CD8-positive, alpha-beta T cell (primary cell): ENCODE measurements at regions of chr13 and their contacts with region 1.

Region 1: GRCh38 chr13:40190641-40191100 is 475.8 kb downstream of the FOXO1 start:
- DNase-seq: peak; percentile 36 to 85 (median 75)
- ATAC-seq: peak; percentile 36
- H3K4me3 ChIP-seq: no peak overlapping the region
- H3K4me3 Mint-ChIP-seq: peak overlapping the region; percentile 66
- H3K27ac ChIP-seq: peak overlapping the region; percentile 50 to 58
- H3K27ac Mint-ChIP-seq: peak overlapping the region; percentile 90
- H3K4me1 ChIP-seq: peaks cover 65% of the 10 kb centered on the region
- H3K4me1 Mint-ChIP-seq: peaks cover 83% of the 10 kb centered on the region
- H3K27me3 ChIP-seq: no peaks in the 10 kb centered on the region
- H3K27me3 Mint-ChIP-seq: no peaks in the 10 kb centered on the region
- CTCF ChIP-seq: no peak

Region 2: DNA sequence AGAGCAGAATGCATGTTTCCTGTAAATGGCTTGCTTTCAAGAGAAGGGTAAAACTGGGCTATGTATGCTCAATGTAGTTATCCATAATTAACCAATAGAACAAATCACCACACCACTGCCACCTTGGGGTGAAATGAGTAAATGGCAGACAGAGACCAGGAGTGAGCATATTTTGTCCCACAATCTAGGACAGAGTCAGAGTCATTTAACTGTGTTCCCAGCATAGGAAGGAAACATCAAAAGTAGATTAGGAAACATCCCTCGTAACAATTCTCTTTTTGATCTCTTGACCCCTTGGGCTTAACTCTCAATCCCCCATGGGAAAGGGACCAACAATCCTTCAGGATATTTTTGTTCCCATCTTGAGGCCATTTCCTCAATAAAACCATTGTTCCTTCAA is 927.6 kb before region 1 on chr13:
- CTCF ChIA-PET with region 1: no interaction called
- POLR2A ChIA-PET with region 1: no interaction called
- intact Hi-C with region 1: no loop called
- DNase-seq: peak in 2 of 9 experiments; percentile 10 to 21
- ATAC-seq: no peak
- H3K4me3 ChIP-seq: no peak overlapping the region
- H3K4me3 Mint-ChIP-seq: no peak overlapping the region
- H3K27ac ChIP-seq: no peak overlapping the region
- H3K27ac Mint-ChIP-seq: no peak overlapping the region
- H3K4me1 ChIP-seq: no peaks in the 10 kb centered on the region
- H3K4me1 Mint-ChIP-seq: no peaks in the 10 kb centered on the region
- H3K27me3 ChIP-seq: no peaks in the 10 kb centered on the region
- H3K27me3 Mint-ChIP-seq: peaks cover 7% of the 10 kb centered on the region
- CTCF ChIP-seq: peak; percentile 41

Region 3: GRCh38 chr13:39577838-39578491 is 612.7 kb before region 1 on chr13:
- CTCF ChIA-PET with region 1: no interaction called
- POLR2A ChIA-PET with region 1: no interaction called
- intact Hi-C with region 1: no loop called
- DNase-seq: no peak
- ATAC-seq: no peak
- H3K4me3 ChIP-seq: no peak overlapping the region
- H3K4me3 Mint-ChIP-seq: no peak overlapping the region
- H3K27ac ChIP-seq: no peak overlapping the region
- H3K27ac Mint-ChIP-seq: no peak overlapping the region
- H3K4me1 ChIP-seq: no peaks in the 10 kb centered on the region
- H3K4me1 Mint-ChIP-seq: no peaks in the 10 kb centered on the region
- H3K27me3 ChIP-seq: no peaks in the 10 kb centered on the region
- H3K27me3 Mint-ChIP-seq: no peaks in the 10 kb centered on the region
- CTCF ChIP-seq: no peak

Region 4: GRCh38 chr13:40149611-40150274 is 40.9 kb before region 1 on chr13:
- CTCF ChIA-PET with region 1: interaction called, 3 read pairs
- POLR2A ChIA-PET with region 1: interaction called, 7 read pairs
- intact Hi-C with region 1: loop called in 1 of 2 experiments (anchors 5 kb)
- DNase-seq: no peak
- ATAC-seq: no peak
- H3K4me3 ChIP-seq: no peak overlapping the region
- H3K4me3 Mint-ChIP-seq: no peak overlapping the region
- H3K27ac ChIP-seq: no peak overlapping the region
- H3K27ac Mint-ChIP-seq: no peak overlapping the region
- H3K4me1 ChIP-seq: peaks cover 36% of the 10 kb centered on the region
- H3K4me1 Mint-ChIP-seq: peaks cover 59% of the 10 kb centered on the region
- H3K27me3 ChIP-seq: no peaks in the 10 kb centered on the region
- H3K27me3 Mint-ChIP-seq: no peaks in the 10 kb centered on the region
- CTCF ChIP-seq: no peak

Region 5: DNA sequence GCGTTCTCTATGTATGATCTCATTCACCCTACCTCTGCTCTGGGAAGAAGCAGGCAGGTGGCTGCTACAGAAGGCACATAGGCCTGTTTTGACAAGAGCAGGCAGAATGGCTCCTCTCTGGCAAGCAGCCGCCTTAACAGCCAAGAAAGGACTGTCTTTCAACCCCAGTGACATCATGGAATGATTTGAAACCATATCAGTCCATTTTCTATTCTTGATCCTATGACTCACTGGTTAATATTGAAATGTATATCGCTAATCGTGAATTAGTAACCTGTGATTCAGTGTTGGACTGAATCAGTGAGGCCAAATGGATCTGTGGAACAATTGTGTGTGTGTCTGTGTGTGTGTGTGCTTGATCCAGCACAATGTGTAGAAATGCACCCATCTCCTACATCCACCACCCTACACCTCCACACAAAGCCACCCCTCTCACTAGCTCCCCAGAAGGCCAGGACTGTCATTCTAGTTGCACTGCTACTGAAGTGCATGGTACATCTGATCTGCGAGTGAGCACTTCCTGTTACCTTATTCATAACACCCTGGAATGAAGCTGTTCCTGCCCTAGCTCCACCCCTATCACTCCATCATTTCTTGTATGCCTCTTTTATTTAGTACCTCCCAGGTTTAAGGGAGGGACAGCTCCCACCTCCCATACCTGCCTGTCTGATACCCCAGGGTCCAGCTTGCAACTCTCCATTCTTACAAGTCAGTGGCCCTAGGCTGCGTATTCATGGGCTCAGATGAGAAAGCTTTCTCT is 15.8 kb after region 1 on chr13:
- CTCF ChIA-PET with region 1: interaction called, 18 read pairs
- POLR2A ChIA-PET with region 1: interaction called, 151 read pairs
- intact Hi-C with region 1: loop called (anchors 1 to 2 kb)
- DNase-seq: peak in 7 of 9 experiments; percentile 42 to 84 (median 52)
- ATAC-seq: peak; percentile 93
- H3K4me3 ChIP-seq: no peak overlapping the region
- H3K4me3 Mint-ChIP-seq: peak overlapping the region; percentile 73
- H3K27ac ChIP-seq: peak overlapping the region; percentile 65 to 76
- H3K27ac Mint-ChIP-seq: peak overlapping the region; percentile 100
- H3K4me1 ChIP-seq: peaks cover 58% of the 10 kb centered on the region
- H3K4me1 Mint-ChIP-seq: peaks cover 77% of the 10 kb centered on the region
- H3K27me3 ChIP-seq: no peaks in the 10 kb centered on the region
- H3K27me3 Mint-ChIP-seq: no peaks in the 10 kb centered on the region
- CTCF ChIP-seq: no peak

Region 6: DNA sequence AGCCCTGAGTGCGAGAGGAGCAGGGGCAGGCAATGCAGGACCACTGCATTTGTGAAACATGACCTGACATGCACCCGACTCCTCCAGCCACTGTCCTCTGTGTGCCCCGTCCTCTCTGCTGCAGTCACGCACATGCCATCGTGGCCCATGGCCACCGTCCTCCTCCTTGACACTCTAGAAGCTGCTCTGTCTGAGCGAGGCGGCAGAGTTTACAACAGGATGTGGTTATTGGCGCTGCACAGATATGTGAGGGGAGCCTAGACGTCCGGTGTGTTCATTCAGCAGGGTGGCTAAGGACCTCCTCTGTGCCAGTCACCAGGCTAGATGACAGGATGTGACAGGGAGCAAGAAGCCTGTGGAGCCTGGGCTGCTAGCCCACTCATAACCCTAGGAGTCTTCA is 197.9 kb after region 1 on chr13:
- CTCF ChIA-PET with region 1: no interaction called
- POLR2A ChIA-PET with region 1: interaction called, 10 read pairs
- intact Hi-C with region 1: loop called in 1 of 2 experiments (anchors 1 kb)
- DNase-seq: peak; percentile 65 to 95 (median 85)
- ATAC-seq: peak; percentile 90
- H3K4me3 ChIP-seq: peak overlapping the region; percentile 48 to 53
- H3K4me3 Mint-ChIP-seq: peak overlapping the region; percentile 88
- H3K27ac ChIP-seq: peak overlapping the region; percentile 91 to 99
- H3K27ac Mint-ChIP-seq: peak overlapping the region; percentile 98
- H3K4me1 ChIP-seq: peaks cover 29% of the 10 kb centered on the region
- H3K4me1 Mint-ChIP-seq: peaks cover 73% of the 10 kb centered on the region
- H3K27me3 ChIP-seq: no peaks in the 10 kb centered on the region
- H3K27me3 Mint-ChIP-seq: no peaks in the 10 kb centered on the region
- CTCF ChIP-seq: no peak

Region 7: GRCh38 chr13:40494513-40494912 is 303.8 kb after region 1 on chr13:
- CTCF ChIA-PET with region 1: interaction called, 5 read pairs
- POLR2A ChIA-PET with region 1: no interaction called
- intact Hi-C with region 1: loop called in 1 of 2 experiments (anchors 2 kb)
- DNase-seq: peak in 2 of 9 experiments; percentile 45 to 70
- ATAC-seq: peak; percentile 53
- H3K4me3 ChIP-seq: peak overlapping the region; percentile 19 to 29
- H3K4me3 Mint-ChIP-seq: peak overlapping the region; percentile 78
- H3K27ac ChIP-seq: peak overlapping the region; percentile 36 to 56
- H3K27ac Mint-ChIP-seq: peak overlapping the region; percentile 97
- H3K4me1 ChIP-seq: peaks cover 78% of the 10 kb centered on the region
- H3K4me1 Mint-ChIP-seq: peaks cover 88% of the 10 kb centered on the region
- H3K27me3 ChIP-seq: no peaks in the 10 kb centered on the region
- H3K27me3 Mint-ChIP-seq: no peaks in the 10 kb centered on the region
- CTCF ChIP-seq: no peak